ENCODE measurements at regions of chr3 and their contacts with region 1.

Region 1: GRCh38 chr3:160587105-160587504 is 21.7 kb upstream of the KPNA4 start:
- DNase-seq: no peak
- H3K4me3 ChIP-seq: no peak overlapping the region
- H3K27ac ChIP-seq: no peak overlapping the region
- H3K4me1 ChIP-seq: no peaks in the 10 kb centered on the region
- H3K27me3 ChIP-seq: no peaks in the 10 kb centered on the region
- CTCF ChIP-seq: no peak

Region 2: DNA sequence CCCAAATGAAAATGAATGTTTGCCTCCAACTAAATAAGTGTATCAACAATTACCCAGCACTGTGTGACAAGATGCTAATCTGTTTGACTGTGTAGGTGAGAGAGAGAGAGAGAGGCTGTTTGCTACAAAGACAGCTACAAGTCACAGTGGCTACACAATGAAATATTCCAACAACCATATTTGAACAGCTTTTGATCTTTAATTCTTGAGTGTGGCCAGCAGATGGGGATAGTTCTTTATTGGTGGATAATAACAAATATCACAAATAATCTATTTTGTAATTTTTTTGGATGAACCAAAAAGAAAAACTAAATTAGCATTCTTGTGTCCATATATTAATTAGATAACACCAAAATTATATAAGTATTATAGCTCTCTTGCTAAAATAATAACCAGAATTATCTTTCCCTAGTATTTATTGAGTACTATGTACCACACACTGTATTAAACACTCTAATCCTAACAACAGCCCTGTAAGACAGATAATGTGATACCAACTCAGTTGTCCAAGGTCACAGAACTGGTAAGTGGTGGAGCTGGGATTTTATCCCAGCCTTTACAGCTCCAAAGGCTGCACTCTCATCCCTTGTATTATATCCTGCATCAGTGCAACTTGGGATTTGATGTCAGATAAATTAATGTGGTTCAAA is 423.8 kb before region 1 on chr3:
- CTCF ChIA-PET with region 1: no interaction called
- dilution Hi-C with region 1: no loop called
- in situ Hi-C with region 1: no loop called
- intact Hi-C with region 1: no loop called
- DNase-seq: no peak
- H3K4me3 ChIP-seq: no peak overlapping the region
- H3K27ac ChIP-seq: no peak overlapping the region
- H3K4me1 ChIP-seq: no peaks in the 10 kb centered on the region
- H3K27me3 ChIP-seq: no peaks in the 10 kb centered on the region
- CTCF ChIP-seq: peak; percentile 31 to 46

Region 3: GRCh38 chr3:160612386-160613075 is 25.4 kb after region 1 on chr3:
- CTCF ChIA-PET with region 1: no interaction called
- dilution Hi-C with region 1: no loop called
- in situ Hi-C with region 1: no loop called
- intact Hi-C with region 1: loop called (anchors 1 kb)
- DNase-seq: peak; percentile 50
- H3K4me3 ChIP-seq: no peak overlapping the region
- H3K27ac ChIP-seq: no peak overlapping the region
- H3K4me1 ChIP-seq: peaks cover 36% of the 10 kb centered on the region
- H3K27me3 ChIP-seq: no peaks in the 10 kb centered on the region
- CTCF ChIP-seq: no peak